ENCODE measurements at regions of chr10 and their contacts with region 1.

Region 1: DNA sequence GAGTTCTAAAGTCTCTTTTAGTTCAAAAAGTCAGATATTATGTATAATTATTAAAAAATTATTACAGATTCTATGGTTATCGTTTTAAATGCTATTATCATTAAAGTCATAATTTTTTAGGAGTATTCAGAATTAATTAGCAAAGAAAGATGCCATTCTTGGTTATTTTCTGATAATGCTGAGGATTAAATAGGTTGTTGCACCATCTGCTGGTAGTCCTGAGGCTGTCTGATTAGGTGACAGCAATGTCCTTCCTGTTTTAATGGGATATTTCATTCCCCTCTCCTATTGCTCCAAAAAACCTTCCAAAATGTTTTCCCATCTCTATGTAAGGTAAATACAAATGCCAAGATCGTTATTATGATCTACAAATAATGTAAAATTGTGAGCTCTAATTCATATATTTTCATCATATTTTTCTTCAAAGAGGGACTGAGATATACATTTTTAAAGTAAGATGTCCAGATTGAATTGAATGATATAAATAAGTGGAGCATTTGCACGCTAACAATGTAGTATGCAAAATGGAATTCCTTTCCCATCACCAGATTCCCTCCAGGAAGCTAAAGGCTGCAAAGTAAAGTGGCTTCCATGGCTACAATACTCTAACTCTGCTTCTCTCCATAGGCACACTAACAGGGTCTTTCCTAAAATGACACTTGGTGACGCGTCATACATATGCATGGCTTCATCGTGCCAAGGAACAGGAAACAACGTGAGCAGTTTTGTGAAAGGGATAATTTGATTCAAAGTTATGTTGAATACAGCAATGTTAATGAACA is 58.8 kb upstream of the AKR1E2 start:
- DNase-seq: peak; percentile 46
- H3K4me3 ChIP-seq: no peak overlapping the region
- H3K27ac ChIP-seq: peak overlapping the region; percentile 96
- H3K4me1 ChIP-seq: peaks cover 63% of the 10 kb centered on the region
- H3K27me3 ChIP-seq: no peaks in the 10 kb centered on the region
- CTCF ChIP-seq: peak; percentile 71 to 76

Region 2: DNA sequence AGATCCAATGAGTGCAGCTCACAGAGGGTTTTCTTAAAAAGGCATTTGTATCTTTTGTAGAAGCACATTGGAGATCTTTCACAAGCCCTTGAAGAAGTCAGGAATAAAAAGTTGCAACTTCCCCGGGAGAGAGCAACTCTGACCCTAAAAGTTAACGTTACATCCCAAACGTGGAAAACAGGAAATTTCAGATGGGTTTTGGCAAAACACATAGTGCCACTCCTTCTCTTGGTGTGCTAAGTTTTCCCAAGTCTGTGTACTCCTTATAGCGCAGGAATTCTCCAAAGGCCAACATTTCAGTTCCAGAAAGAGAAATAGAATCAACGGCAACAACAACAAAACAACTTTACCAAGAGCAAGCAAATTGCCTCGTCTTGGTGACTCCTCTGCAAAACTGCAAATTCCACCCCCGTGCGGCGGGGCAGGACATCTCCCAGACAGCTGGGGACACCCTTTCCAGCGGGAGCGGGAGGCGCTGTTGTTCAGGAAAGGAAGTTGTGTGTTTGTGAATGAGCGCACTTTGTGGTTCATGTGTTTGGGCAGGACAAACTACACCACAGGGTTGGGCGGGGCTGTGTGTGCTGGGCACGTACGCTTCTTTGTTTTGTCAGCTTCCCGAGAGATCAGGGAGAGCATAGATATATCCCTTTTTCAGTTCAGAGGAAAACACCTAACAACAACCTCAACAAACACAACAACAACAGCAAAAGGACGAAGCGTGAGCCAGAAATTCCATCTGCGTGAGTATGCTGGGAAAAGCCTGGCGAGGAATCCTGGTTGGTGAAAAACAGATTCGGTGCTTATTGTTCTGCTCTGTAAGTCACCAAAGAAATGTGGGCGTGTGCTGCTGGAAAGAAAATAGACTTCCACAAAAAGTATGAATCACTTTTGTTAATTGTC is 1299.9 kb before region 1 on chr10:
- CTCF ChIA-PET with region 1: no interaction called
- dilution Hi-C with region 1: no loop called
- in situ Hi-C with region 1: no loop called
- intact Hi-C with region 1: loop called (anchors 5 kb)
- DNase-seq: peak; percentile 97
- H3K4me3 ChIP-seq: peak overlapping the region in 2 of 3 experiments; percentile 14 to 27
- H3K27ac ChIP-seq: peak overlapping the region; percentile 100
- H3K4me1 ChIP-seq: peaks cover 35% of the 10 kb centered on the region
- H3K27me3 ChIP-seq: no peaks in the 10 kb centered on the region
- CTCF ChIP-seq: peak; percentile 17 to 54

Region 3: GRCh38 chr10:3852147-3852904 is 914.9 kb before region 1 on chr10:
- CTCF ChIA-PET with region 1: no interaction called
- dilution Hi-C with region 1: no loop called
- in situ Hi-C with region 1: no loop called
- intact Hi-C with region 1: loop called (anchors 1 kb)
- DNase-seq: peak; percentile 100
- H3K4me3 ChIP-seq: no peak overlapping the region
- H3K27ac ChIP-seq: peak overlapping the region; percentile 99
- H3K4me1 ChIP-seq: peaks cover 39% of the 10 kb centered on the region
- H3K27me3 ChIP-seq: no peaks in the 10 kb centered on the region
- CTCF ChIP-seq: no peak

Region 4: DNA sequence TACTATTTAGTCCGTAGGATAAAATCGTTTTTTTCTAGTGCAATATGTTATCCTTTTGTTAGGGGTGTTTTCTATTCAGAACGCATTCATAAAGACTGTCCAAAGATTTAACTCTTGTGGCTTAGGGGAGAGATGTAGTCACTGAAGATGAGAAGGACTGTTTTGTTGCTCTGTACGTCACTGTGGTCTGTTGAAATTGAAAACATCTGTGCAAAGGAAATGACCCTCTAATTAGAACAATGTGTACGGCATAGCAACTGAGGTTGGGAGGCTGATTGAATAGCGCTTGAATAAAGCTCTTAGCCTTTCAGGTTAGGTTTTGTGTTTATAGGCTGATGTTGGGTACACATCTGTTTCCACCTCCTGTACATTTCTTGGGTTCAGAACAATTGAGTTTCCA is 394.6 kb before region 1 on chr10:
- CTCF ChIA-PET with region 1: no interaction called
- dilution Hi-C with region 1: no loop called
- in situ Hi-C with region 1: loop called in 1 of 2 experiments (anchors 25 kb)
- intact Hi-C with region 1: no loop called
- DNase-seq: no peak
- H3K4me3 ChIP-seq: no peak overlapping the region
- H3K27ac ChIP-seq: no peak overlapping the region
- H3K4me1 ChIP-seq: no peaks in the 10 kb centered on the region
- H3K27me3 ChIP-seq: no peaks in the 10 kb centered on the region
- CTCF ChIP-seq: no peak

Region 5: GRCh38 chr10:4639960-4640359 is 127.3 kb before region 1 on chr10:
- CTCF ChIA-PET with region 1: no interaction called
- dilution Hi-C with region 1: no loop called
- in situ Hi-C with region 1: no loop called
- intact Hi-C with region 1: no loop called
- DNase-seq: no peak
- H3K4me3 ChIP-seq: no peak overlapping the region
- H3K27ac ChIP-seq: no peak overlapping the region
- H3K4me1 ChIP-seq: peaks cover 13% of the 10 kb centered on the region
- H3K27me3 ChIP-seq: no peaks in the 10 kb centered on the region
- CTCF ChIP-seq: no peak

Region 6: GRCh38 chr10:4656576-4657182 is 110.5 kb before region 1 on chr10:
- CTCF ChIA-PET with region 1: no interaction called
- dilution Hi-C with region 1: no loop called
- in situ Hi-C with region 1: loop called (anchors 5 to 25 kb)
- intact Hi-C with region 1: loop called (anchors 1 kb)
- DNase-seq: peak; percentile 52
- H3K4me3 ChIP-seq: no peak overlapping the region
- H3K27ac ChIP-seq: peak overlapping the region; percentile 37
- H3K4me1 ChIP-seq: peaks cover 10% of the 10 kb centered on the region
- H3K27me3 ChIP-seq: no peaks in the 10 kb centered on the region
- CTCF ChIP-seq: peak; percentile 89 to 91

Region 7: GRCh38 chr10:4686644-4686996 is 80.6 kb before region 1 on chr10:
- CTCF ChIA-PET with region 1: no interaction called
- dilution Hi-C with region 1: no loop called
- in situ Hi-C with region 1: no loop called
- intact Hi-C with region 1: loop called (anchors 2 kb)
- DNase-seq: peak; percentile 99
- H3K4me3 ChIP-seq: peak overlapping the region in 2 of 3 experiments; percentile 34 to 35
- H3K27ac ChIP-seq: peak overlapping the region; percentile 100
- H3K4me1 ChIP-seq: peaks cover 55% of the 10 kb centered on the region
- H3K27me3 ChIP-seq: no peaks in the 10 kb centered on the region
- CTCF ChIP-seq: no peak

Region 8: DNA sequence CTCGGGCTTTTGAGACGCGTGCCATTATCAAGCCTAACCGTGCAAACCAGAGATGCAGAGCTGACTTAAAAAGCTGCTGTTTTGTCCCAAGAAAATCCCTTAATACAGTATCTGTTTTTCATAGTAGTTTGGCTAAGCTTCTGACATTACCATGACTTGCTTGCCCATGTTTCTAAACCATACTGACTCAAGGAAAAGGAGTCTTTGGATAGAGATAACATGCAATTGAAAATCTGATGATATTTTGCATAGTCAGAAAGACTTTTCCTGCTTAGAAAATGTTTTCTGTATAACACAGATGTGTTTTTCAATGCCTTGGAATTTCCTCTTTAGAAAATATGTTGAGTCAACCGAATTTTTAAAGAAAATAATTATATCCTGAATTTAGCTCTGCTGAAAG is 37.2 kb after region 1 on chr10:
- CTCF ChIA-PET with region 1: no interaction called
- dilution Hi-C with region 1: no loop called
- in situ Hi-C with region 1: no loop called
- intact Hi-C with region 1: no loop called
- DNase-seq: no peak
- H3K4me3 ChIP-seq: no peak overlapping the region
- H3K27ac ChIP-seq: no peak overlapping the region
- H3K4me1 ChIP-seq: peaks cover 29% of the 10 kb centered on the region
- H3K27me3 ChIP-seq: no peaks in the 10 kb centered on the region
- CTCF ChIP-seq: no peak

Region 9: GRCh38 chr10:4849555-4850242 is 82.5 kb after region 1 on chr10:
- CTCF ChIA-PET with region 1: no interaction called
- dilution Hi-C with region 1: no loop called
- in situ Hi-C with region 1: no loop called
- intact Hi-C with region 1: no loop called
- DNase-seq: peak; percentile 91
- H3K4me3 ChIP-seq: no peak overlapping the region
- H3K27ac ChIP-seq: no peak overlapping the region
- H3K4me1 ChIP-seq: peaks cover 9% of the 10 kb centered on the region
- H3K27me3 ChIP-seq: no peaks in the 10 kb centered on the region
- CTCF ChIP-seq: peak; percentile 100

Region 10: GRCh38 chr10:5002013-5002727 is 234.9 kb after region 1 on chr10:
- CTCF ChIA-PET with region 1: no interaction called
- dilution Hi-C with region 1: no loop called
- in situ Hi-C with region 1: no loop called
- intact Hi-C with region 1: no loop called
- DNase-seq: no peak
- H3K4me3 ChIP-seq: peak overlapping the region in 2 of 3 experiments; percentile 2 to 32
- H3K27ac ChIP-seq: no peak overlapping the region
- H3K4me1 ChIP-seq: peaks cover 4% of the 10 kb centered on the region
- H3K27me3 ChIP-seq: no peaks in the 10 kb centered on the region
- CTCF ChIP-seq: no peak

Measured in mammary epithelial cell (primary cell).